ENCODE measurements at regions of chr10 and their contacts with region 1.

Region 1: GRCh38 chr10:42872865-42873643 is 90.5 kb downstream of the BMS1 start:
- DNase-seq: no peak
- ATAC-seq: no peak

Region 2: DNA sequence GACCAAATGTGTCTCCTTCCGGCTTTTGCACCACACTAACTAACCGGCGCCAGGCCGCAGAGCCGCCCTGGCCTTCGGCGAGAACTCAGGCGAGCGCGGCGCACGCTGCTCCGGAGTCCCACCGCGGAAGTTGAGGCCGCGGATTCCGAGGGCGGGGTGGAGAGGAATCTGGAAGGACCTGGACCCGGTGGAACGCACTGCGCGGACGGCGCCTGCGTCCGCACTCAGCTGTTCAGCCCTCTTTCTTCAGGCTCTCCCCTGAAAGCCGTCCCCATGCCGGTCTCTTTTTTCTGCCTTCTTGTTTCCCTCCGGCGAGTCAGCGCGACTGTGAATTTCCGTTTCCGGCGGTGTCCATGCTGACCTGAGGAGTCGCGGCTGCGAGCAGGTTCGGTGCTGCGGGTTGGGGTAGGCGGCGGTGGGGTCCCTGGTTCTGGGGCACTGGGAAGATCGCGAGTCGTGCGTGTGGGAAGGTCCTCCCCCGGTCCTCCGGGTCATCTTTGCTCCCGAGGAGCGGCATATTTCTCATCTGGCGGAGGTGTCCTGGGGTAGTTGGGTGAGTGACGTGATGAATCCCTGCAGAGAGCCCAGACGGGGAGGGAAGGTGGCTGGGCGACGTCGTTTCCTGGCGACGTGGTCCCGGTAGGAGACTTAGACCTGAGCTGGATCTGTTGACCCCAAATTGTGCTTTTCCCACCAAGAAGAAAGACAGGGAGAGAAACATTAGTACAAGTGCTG is 90.4 kb before region 1 on chr10 and contains the start of gene BMS1:
- intact Hi-C with region 1: no loop called
- DNase-seq: peak; percentile 89 to 91
- ATAC-seq: peak; percentile 94
- total RNA-seq, gene BMS1: 10.6 to 13.2 TPM

Region 3: GRCh38 chr10:43099928-43100327 is 226.9 kb after region 1 on chr10:
- intact Hi-C with region 1: loop called (anchors 5 to 10 kb)
- DNase-seq: no peak
- ATAC-seq: no peak

Measured in left colon (tissue), 2 donors.